Panc1 (cell line): ENCODE measurements at regions of chr3 and their contacts with region 1.

Region 1: DNA sequence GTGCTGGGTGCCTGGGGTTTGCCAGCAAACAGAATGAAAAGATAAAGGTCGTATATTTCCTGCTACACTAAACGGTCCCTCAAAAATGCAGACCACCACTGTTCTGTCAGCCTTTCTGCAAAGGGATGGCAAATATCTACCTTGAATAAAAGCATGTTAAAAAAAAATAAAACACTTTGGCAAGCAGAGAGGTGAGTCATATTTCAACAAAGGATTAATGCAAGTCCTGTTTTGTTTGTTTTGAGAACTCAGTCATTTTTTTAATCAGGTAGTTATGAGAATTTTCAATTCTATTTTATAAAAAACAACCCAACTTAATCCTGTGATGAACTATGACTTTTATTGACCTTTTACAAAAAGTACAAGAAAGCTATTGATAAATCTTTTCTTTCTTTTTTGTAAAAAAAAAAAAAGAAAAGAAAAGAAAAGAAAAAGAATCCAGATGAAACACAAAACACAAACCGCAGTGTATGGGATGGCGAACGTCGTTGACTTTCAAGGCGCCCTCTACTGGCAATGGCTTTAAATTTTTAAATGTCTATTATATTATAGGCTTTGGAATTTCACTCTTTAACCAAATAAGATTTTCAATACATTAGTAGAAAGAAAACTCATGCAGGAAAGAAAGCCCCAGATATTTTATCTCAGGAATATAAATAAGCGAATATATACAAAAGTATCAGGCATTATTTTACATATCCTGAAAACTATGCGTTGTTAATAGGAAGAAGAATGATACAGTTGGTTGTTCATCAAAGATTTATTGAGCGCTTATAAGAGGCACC is 87.8 kb downstream of the NCEH1 start:
- DNase-seq: no peak
- ATAC-seq: peak; percentile 72
- H3K4me3 ChIP-seq: peak overlapping the region; percentile 42 to 69
- H3K27ac ChIP-seq: peak overlapping the region; percentile 93
- H3K4me1 ChIP-seq: peaks cover 10% of the 10 kb centered on the region; the same call in 1 of the 2 replicates
- H3K27me3 ChIP-seq: no peaks in the 10 kb centered on the region
- CTCF ChIP-seq: peak; percentile 81; the same call in 1 of the 2 replicates

Region 2: DNA sequence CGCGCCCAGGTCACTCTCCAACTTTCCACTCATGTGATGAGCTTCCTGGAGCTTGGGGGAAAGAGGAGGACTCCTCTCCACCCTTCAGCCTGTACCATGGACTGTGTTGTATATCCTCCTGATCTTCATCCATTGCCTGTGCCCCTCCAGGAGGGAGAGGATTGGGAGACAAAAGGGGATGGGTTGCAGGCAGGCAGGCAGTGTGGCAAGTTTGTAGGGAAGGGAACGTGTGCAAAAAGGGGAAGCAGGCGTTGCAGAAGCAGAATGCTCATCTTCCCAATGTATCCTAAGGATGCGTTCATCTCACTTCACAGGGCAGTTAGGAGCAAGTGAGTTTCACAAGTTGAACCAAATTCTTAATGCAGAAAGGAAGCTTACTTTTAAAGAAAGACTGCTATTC is 146.8 kb before region 1 on chr3:
- CTCF ChIA-PET with region 1: interaction called, 12 read pairs
- POLR2A ChIA-PET with region 1: no interaction called
- in situ Hi-C with region 1: no loop called
- intact Hi-C with region 1: no loop called
- DNase-seq: no peak
- ATAC-seq: no peak
- H3K4me3 ChIP-seq: no peak overlapping the region; a peak in 1 of 4 replicates
- H3K27ac ChIP-seq: no peak overlapping the region
- H3K4me1 ChIP-seq: no peaks in the 10 kb centered on the region
- H3K27me3 ChIP-seq: no peaks in the 10 kb centered on the region
- CTCF ChIP-seq: no peak

Region 3: DNA sequence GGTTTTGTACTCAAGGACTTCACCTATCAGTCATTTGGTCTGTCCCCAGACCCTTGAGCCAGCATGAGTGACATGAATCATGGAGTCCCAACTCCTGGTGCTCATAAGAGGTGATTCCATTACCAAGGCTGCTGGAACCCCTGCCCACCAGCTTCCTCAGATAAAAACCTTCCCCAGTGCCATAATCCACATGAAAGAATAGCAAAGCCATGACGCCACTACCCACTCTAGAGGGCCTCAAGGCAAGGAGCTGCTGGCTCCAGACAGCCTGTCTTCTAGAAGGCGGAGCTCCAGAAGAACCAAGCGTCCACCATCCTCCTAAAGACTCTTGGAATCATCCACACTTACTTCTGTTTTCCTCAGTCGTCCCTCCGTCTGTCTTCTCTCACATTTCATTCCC is 18.2 kb after region 1 on chr3:
- CTCF ChIA-PET with region 1: no interaction called
- POLR2A ChIA-PET with region 1: interaction called, 18 read pairs
- in situ Hi-C with region 1: no loop called
- intact Hi-C with region 1: no loop called
- DNase-seq: no peak
- ATAC-seq: no peak
- H3K4me3 ChIP-seq: no peak overlapping the region
- H3K27ac ChIP-seq: no peak overlapping the region
- H3K4me1 ChIP-seq: no peaks in the 10 kb centered on the region; the same call in 1 of the 2 replicates
- H3K27me3 ChIP-seq: no peaks in the 10 kb centered on the region
- CTCF ChIP-seq: no peak

Region 4: DNA sequence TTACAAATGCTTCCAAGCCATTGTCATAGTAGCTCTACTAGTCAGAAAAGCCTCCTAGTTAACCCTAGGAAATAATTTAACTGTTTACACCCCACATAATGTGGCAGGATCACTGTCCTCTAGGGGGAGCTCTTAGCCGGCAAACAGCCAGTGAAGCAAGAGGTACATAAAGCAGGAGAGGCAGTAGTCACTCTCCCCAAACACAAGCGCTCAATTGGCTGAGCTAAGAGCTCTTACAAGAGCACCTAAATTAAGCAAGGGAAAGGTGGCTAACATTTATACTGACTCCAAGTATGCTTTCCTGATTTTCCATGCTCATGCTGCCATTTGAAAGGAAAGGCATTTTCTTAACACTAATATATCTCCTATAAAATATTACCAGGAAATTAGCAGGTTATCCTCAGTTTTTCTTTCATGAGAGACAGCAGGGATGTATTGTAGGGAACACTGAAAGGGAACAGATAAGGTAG is 50.1 kb after region 1 on chr3:
- CTCF ChIA-PET with region 1: interaction called, 18 read pairs
- POLR2A ChIA-PET with region 1: interaction called, 6 read pairs
- in situ Hi-C with region 1: no loop called
- intact Hi-C with region 1: no loop called
- DNase-seq: peak; percentile 68
- ATAC-seq: peak; percentile 93
- H3K4me3 ChIP-seq: no peak overlapping the region
- H3K27ac ChIP-seq: peak overlapping the region; percentile 79
- H3K4me1 ChIP-seq: peaks cover 27% of the 10 kb centered on the region
- H3K27me3 ChIP-seq: no peaks in the 10 kb centered on the region
- CTCF ChIP-seq: peak; percentile 95

Region 5: DNA sequence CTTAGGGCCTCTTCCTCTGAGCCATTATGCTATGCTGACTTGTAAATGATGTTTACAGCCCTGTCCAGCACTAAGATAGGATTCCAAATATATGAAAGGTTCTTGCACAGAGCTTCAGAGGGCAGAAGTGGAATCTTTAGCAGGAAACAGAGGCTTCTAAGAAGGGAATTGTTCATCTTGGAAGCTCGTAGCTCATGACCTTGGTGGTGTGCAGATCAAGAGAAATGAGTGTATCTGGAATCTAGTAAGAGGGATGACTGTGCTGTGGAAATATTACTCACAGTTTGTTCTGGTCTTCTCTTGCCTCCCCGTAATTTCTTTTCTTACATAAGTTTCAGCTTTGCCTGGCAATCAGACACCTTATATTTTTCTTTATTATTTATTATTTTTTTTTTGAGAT is 342.1 kb after region 1 on chr3:
- CTCF ChIA-PET with region 1: no interaction called
- POLR2A ChIA-PET with region 1: no interaction called
- in situ Hi-C with region 1: no loop called
- intact Hi-C with region 1: no loop called
- DNase-seq: no peak
- ATAC-seq: no peak
- H3K4me3 ChIP-seq: no peak overlapping the region
- H3K27ac ChIP-seq: no peak overlapping the region
- H3K4me1 ChIP-seq: no peaks in the 10 kb centered on the region
- H3K27me3 ChIP-seq: no peaks in the 10 kb centered on the region
- CTCF ChIP-seq: no peak

Region 6: GRCh38 chr3:174355505-174355904 is 1732.4 kb after region 1 on chr3:
- CTCF ChIA-PET with region 1: no interaction called
- POLR2A ChIA-PET with region 1: interaction called, 14 read pairs
- in situ Hi-C with region 1: no loop called
- intact Hi-C with region 1: no loop called
- DNase-seq: no peak
- ATAC-seq: peak; percentile 69; the same call in 1 of the 2 replicates
- H3K4me3 ChIP-seq: no peak overlapping the region
- H3K27ac ChIP-seq: no peak overlapping the region; the same call in 1 of the 2 replicates
- H3K4me1 ChIP-seq: no peaks in the 10 kb centered on the region
- H3K27me3 ChIP-seq: no peaks in the 10 kb centered on the region
- CTCF ChIP-seq: peak; percentile 59